ENCODE measurements at regions of chr1 and their contacts with region 1.

Region 1: DNA sequence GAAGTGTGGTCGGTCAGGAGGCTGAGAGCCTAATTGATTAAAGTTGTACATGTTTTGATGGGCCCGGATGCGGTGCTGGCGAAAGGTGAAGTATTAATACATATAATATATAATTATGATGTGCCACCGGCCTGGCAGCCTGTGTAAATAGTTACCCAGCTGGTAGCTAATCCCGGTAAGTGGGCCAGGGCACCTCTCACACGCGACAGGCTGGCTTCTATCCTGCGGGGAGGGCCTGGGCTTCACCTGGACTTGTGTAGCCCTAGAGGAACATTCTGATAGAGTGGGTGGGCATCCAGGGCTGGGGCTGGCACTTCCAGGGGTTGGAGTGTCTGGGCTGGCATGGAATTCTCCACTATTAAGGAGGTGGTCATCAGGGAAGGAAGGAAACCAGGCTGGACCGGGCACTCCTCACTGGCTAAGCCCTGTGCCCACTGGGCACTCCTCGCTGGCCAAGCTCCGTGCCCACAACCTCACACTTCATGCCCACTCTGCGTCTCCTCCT is 48.3 kb downstream of the IGSF21 start:
- DNase-seq: no peak
- H3K4me3 ChIP-seq: no peak overlapping the region
- H3K27ac ChIP-seq: no peak overlapping the region
- H3K4me1 ChIP-seq: no peaks in the 10 kb centered on the region; a peak in 1 of 7 replicates
- H3K27me3 ChIP-seq: no peaks in the 10 kb centered on the region
- CTCF ChIP-seq: no peak
- EP300 ChIP-seq: no peak
- POLR2A ChIP-seq: no peak
- RAD21 ChIP-seq: no peak

Region 2: GRCh38 chr1:18144916-18145647 is 10.9 kb before region 1 on chr1:
- CTCF ChIA-PET with region 1: interaction called, 12 read pairs
- POLR2A ChIA-PET with region 1: interaction called, 3 read pairs
- DNase-seq: no peak
- H3K4me3 ChIP-seq: no peak overlapping the region
- H3K27ac ChIP-seq: no peak overlapping the region
- H3K4me1 ChIP-seq: peaks cover 0 to 8% (median 1%) of the 10 kb centered on the region in 4 experiments; a peak in 3 of 7 replicates
- H3K27me3 ChIP-seq: no peaks in the 10 kb centered on the region
- CTCF ChIP-seq: no peak
- EP300 ChIP-seq: no peak
- POLR2A ChIP-seq: no peak
- RAD21 ChIP-seq: no peak

Region 3: GRCh38 chr1:18385239-18385790 is 229.4 kb after region 1 on chr1:
- CTCF ChIA-PET with region 1: no interaction called
- POLR2A ChIA-PET with region 1: no interaction called
- DNase-seq: peak in 1 of 2 experiments; percentile 66
- H3K4me3 ChIP-seq: peak overlapping the region in 2 of 4 experiments; percentile 5 to 31; a peak in 2 of 8 replicates
- H3K27ac ChIP-seq: no peak overlapping the region
- H3K4me1 ChIP-seq: peaks cover 4 to 13% (median 11%) of the 10 kb centered on the region in 4 experiments
- H3K27me3 ChIP-seq: no peaks in the 10 kb centered on the region; a peak in 1 of 7 replicates
- CTCF ChIP-seq: no peak
- EP300 ChIP-seq: no peak
- POLR2A ChIP-seq: no peak
- RAD21 ChIP-seq: no peak